H1 (cell line): ENCODE measurements at regions of chr2 and their contacts with region 1.

Region 1: GRCh38 chr2:202178342-202178958 is 59.9 kb downstream of the SUMO1 start:
- DNase-seq: peak in 1 of 2 experiments; percentile 74
- H3K4me3 ChIP-seq: no peak overlapping the region
- H3K27ac ChIP-seq: no peak overlapping the region
- H3K4me1 ChIP-seq: no peaks in the 10 kb centered on the region
- H3K27me3 ChIP-seq: no peaks in the 10 kb centered on the region
- CTCF ChIP-seq: peak in 2 of 3 experiments; percentile 76 to 86; a peak in 3 of 4 replicates
- EP300 ChIP-seq: no peak
- POLR2A ChIP-seq: no peak
- RAD21 ChIP-seq: peak; percentile 97 to 98

Region 2: DNA sequence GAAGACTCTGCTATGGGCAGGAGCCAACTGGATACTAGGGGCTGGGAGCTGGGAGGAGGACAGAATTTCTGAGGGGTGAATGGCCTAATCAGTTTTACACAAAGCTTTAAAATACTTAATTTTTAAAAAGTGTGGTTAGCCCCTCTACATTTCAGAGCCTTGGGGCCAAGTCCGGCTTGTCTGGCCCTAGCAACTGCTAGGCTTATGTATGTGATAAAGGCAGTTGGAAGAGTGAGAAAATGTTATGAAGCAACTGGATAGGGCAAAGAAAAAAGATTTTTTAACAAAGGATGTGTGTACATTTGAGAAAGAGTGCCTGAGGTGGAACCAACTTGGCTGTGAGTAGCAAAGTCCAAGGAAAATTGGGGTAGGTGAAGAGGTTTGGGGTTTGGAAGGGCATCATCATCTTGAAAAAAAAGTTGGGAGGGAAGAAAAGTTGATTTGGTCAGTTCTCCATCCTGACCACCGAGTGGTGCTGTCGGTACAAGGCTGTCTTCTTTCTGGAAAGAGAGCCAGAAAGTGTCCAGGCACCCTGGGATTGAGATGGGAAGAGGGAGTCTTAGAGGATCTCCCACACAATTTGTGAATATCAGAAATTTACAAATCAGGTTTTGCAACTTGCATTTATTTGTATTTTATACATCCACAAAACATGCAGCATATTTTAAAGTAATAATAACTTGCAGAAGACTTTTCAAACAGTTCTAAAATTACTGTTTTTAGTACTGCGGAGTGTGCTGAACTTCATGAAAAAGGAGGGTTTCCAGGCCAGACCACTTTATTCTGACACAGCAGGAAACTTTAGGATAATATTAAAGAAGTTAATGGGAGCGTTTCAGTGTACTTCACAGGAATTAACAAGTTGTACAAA is 382.6 kb before region 1 on chr2:
- CTCF ChIA-PET with region 1: interaction called, 13 read pairs
- POLR2A ChIA-PET with region 1: no interaction called
- DNase-seq: no peak
- H3K4me3 ChIP-seq: no peak overlapping the region
- H3K27ac ChIP-seq: no peak overlapping the region
- H3K4me1 ChIP-seq: no peaks in the 10 kb centered on the region
- H3K27me3 ChIP-seq: no peaks in the 10 kb centered on the region
- CTCF ChIP-seq: peak; percentile 58 to 86 (median 85)
- EP300 ChIP-seq: no peak
- POLR2A ChIP-seq: no peak
- RAD21 ChIP-seq: peak; percentile 94 to 96

Region 3: DNA sequence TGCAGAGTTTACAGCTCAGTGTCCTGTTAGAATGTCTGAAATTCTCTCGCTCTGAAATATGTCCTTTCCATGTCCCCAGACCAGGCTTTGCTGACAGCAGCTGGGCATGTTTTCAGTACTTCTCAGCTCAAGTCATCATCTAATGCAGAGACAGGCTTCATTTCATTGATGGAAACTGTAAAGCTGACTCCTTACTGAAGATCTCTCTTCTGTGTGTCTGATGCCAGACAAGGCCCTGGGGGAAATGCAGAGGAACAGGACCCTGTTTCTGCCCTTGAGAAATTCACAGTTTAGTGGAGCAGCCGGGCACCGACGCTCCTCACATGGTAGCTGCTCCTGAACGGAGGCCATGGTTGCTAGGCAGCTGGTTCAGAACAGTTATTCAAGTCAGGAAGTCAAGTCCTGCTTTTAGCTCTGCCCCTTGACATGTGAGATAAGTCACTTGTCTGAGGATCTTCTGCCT is 169.4 kb before region 1 on chr2:
- CTCF ChIA-PET with region 1: no interaction called
- POLR2A ChIA-PET with region 1: no interaction called
- DNase-seq: no peak
- H3K4me3 ChIP-seq: no peak overlapping the region
- H3K27ac ChIP-seq: no peak overlapping the region
- H3K4me1 ChIP-seq: peaks cover 0 to 4% (median 0%) of the 10 kb centered on the region in 4 experiments; a peak in 3 of 7 replicates
- H3K27me3 ChIP-seq: no peaks in the 10 kb centered on the region
- CTCF ChIP-seq: no peak
- EP300 ChIP-seq: no peak
- POLR2A ChIP-seq: no peak
- RAD21 ChIP-seq: no peak

Region 4: DNA sequence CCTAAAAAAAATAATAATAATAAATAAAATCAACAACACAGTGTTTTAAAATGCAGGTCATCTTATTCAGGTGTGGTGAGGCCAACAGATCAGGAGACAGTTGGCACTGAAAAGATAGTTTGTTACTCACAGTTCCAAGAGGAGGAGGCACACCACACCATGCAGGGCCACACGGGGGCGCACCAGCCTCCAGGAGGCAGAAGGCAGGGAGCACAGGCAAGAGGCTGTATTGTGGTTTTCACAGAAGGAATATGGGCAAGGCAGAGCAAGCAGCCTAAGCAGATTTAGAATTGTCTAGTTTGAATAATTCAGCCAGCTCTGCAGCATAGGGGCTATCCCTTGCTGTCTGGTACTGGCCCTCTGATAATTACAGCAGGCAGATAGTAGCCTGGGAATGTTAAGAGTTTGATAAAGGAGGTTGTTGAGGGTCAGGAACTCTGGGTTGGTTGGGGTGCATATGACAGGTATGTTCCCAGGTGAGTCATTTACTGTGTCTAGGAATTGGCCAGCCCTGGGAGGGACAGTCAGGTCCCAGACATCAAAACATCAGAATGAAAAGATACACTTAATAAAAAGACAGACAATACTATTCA is 74.1 kb before region 1 on chr2:
- CTCF ChIA-PET with region 1: interaction called, 43 read pairs
- POLR2A ChIA-PET with region 1: no interaction called
- DNase-seq: peak; percentile 54 to 95
- H3K4me3 ChIP-seq: no peak overlapping the region
- H3K27ac ChIP-seq: no peak overlapping the region
- H3K4me1 ChIP-seq: peaks cover 0 to 9% (median 6%) of the 10 kb centered on the region in 4 experiments; a peak in 3 of 7 replicates
- H3K27me3 ChIP-seq: no peaks in the 10 kb centered on the region
- CTCF ChIP-seq: peak; percentile 89 to 97 (median 94)
- EP300 ChIP-seq: no peak
- POLR2A ChIP-seq: no peak
- RAD21 ChIP-seq: peak; percentile 81 to 86

Region 5: GRCh38 chr2:202158796-202159195 is 19.7 kb before region 1 on chr2:
- CTCF ChIA-PET with region 1: interaction called, 13 read pairs
- POLR2A ChIA-PET with region 1: no interaction called
- DNase-seq: no peak
- H3K4me3 ChIP-seq: no peak overlapping the region
- H3K27ac ChIP-seq: no peak overlapping the region
- H3K4me1 ChIP-seq: no peaks in the 10 kb centered on the region
- H3K27me3 ChIP-seq: no peaks in the 10 kb centered on the region
- CTCF ChIP-seq: peak; percentile 29 to 45 (median 39); a peak in 3 of 4 replicates
- EP300 ChIP-seq: no peak
- POLR2A ChIP-seq: no peak
- RAD21 ChIP-seq: peak; percentile 64 to 76

Region 6: GRCh38 chr2:202165945-202166344 is 12.5 kb before region 1 on chr2:
- CTCF ChIA-PET with region 1: interaction called, 12 read pairs
- POLR2A ChIA-PET with region 1: interaction called, 3 read pairs
- DNase-seq: no peak
- H3K4me3 ChIP-seq: no peak overlapping the region
- H3K27ac ChIP-seq: no peak overlapping the region
- H3K4me1 ChIP-seq: peaks cover 0 to 3% (median under 1%) of the 10 kb centered on the region in 4 experiments; a peak in 1 of 7 replicates
- H3K27me3 ChIP-seq: peaks cover 2 to 11% (median 9%) of the 10 kb centered on the region in 4 experiments; a peak in 5 of 7 replicates
- CTCF ChIP-seq: no peak
- EP300 ChIP-seq: no peak
- POLR2A ChIP-seq: no peak
- RAD21 ChIP-seq: no peak

Region 7: GRCh38 chr2:202193881-202194353 is 15.5 kb after region 1 on chr2:
- CTCF ChIA-PET with region 1: interaction called, 20 read pairs
- POLR2A ChIA-PET with region 1: no interaction called
- DNase-seq: peak in 1 of 2 experiments; percentile 47
- H3K4me3 ChIP-seq: no peak overlapping the region
- H3K27ac ChIP-seq: no peak overlapping the region
- H3K4me1 ChIP-seq: peaks cover 0 to 3% (median 0%) of the 10 kb centered on the region in 4 experiments; a peak in 2 of 7 replicates
- H3K27me3 ChIP-seq: no peaks in the 10 kb centered on the region
- CTCF ChIP-seq: no peak
- EP300 ChIP-seq: no peak
- POLR2A ChIP-seq: no peak
- RAD21 ChIP-seq: no peak

Region 8: GRCh38 chr2:202344178-202344577 is 165.7 kb after region 1 on chr2:
- CTCF ChIA-PET with region 1: no interaction called
- POLR2A ChIA-PET with region 1: no interaction called
- DNase-seq: no peak
- H3K4me3 ChIP-seq: no peak overlapping the region
- H3K27ac ChIP-seq: no peak overlapping the region
- H3K4me1 ChIP-seq: peaks cover 0 to 3% (median 0%) of the 10 kb centered on the region in 4 experiments; a peak in 1 of 7 replicates
- H3K27me3 ChIP-seq: no peaks in the 10 kb centered on the region
- CTCF ChIP-seq: no peak
- EP300 ChIP-seq: no peak
- POLR2A ChIP-seq: no peak
- RAD21 ChIP-seq: no peak